B cell (primary cell): ENCODE measurements at regions of chr22 and their contacts with region 1.

Region 1: DNA sequence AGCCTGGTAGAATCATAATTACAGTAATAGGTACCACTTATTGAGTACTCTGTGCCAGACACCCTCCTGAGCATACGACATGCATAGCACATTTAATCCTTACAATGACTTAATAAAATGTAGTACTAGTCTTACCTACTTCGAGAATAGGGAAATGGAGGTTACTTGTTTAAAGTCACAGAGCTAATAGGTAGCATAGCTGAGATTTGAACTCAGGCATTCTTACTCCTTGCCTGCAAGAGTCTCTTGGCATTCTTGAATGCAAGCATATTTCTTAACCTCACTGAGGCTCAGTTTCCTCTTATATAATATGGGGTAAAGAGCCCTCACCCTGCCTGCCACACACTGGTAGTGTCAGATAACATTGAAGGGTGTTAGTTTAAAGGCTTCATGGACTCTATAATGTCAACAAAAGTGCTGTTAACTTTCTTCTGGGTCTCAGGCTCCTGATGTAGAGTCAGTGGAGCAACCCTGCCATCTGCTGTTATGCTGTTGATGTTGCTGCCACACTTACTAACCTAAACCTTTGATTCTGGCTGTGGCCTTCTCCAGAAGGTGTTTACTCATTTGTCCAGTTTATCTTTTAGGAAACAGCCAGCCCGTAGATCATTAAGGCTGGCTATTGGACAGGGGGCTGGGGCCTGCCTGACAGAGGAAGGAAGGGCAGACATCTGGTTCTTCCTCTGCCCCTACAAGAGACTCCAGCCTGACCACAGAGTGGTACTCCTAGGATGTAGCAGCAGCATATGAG is 18.9 kb downstream of the LIMK2 start:
- DNase-seq: peak; percentile 71
- ATAC-seq: peak; percentile 56
- H3K4me3 ChIP-seq: no peak overlapping the region
- H3K4me3 Mint-ChIP-seq: no peak overlapping the region
- H3K27ac ChIP-seq: no peak overlapping the region
- H3K27ac Mint-ChIP-seq: peak overlapping the region; percentile 32
- H3K4me1 ChIP-seq: peaks cover 17 to 19% of the 10 kb centered on the region in 2 donors
- H3K4me1 Mint-ChIP-seq: peaks cover 25% of the 10 kb centered on the region
- H3K27me3 ChIP-seq: no peaks in the 10 kb centered on the region
- H3K27me3 Mint-ChIP-seq: no peaks in the 10 kb centered on the region
- CTCF ChIP-seq: peak; percentile 72

Region 2: GRCh38 chr22:31199183-31199582 is 31.9 kb before region 1 on chr22:
- CTCF ChIA-PET with region 1: interaction called, 12 read pairs
- POLR2A ChIA-PET with region 1: no interaction called
- intact Hi-C with region 1: no loop called
- DNase-seq: no peak
- ATAC-seq: no peak
- H3K4me3 ChIP-seq: no peak overlapping the region
- H3K4me3 Mint-ChIP-seq: no peak overlapping the region
- H3K27ac ChIP-seq: no peak overlapping the region
- H3K27ac Mint-ChIP-seq: no peak overlapping the region
- H3K4me1 ChIP-seq: no peaks in the 10 kb centered on the region
- H3K4me1 Mint-ChIP-seq: no peaks in the 10 kb centered on the region
- H3K27me3 ChIP-seq: no peaks in the 10 kb centered on the region
- H3K27me3 Mint-ChIP-seq: no peaks in the 10 kb centered on the region
- CTCF ChIP-seq: no peak